ENCODE measurements at regions of chr12 and their contacts with region 1.

Region 1: DNA sequence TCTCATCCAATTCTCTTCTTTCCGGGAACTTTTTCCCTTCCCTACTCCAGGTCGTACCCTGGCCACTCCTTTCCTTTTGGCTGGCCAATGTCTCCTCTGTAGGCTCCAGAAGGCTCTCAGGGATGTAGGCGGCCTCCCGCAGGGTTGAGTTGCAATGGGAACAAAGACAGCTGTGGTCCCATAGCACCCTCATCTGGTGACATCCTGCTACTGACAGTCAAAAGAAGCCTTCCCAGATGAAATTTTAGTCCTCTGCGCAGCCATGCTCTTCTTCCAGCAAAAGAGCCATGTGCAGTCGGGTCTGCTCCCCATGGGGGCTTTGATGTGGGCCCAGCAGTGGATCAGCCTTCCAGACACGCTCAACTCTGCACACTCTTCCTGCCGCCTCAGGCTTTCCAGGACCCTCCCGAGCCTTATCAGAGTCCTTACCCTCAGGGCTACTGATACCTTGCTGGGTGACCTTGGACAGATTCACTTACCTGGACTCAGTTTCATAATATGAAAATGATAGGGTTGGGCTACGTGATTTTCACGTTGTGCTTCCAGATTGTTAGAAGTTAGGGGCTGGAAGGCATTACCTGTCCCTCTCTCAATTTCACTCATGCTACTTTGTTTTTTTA is 5.5 kb upstream of the CELA1 start:
- DNase-seq: peak in 7 of 9 experiments; percentile 9 to 72 (median 43)
- ATAC-seq: peak; percentile 77
- H3K4me3 ChIP-seq: no peak overlapping the region
- H3K4me3 Mint-ChIP-seq: no peak overlapping the region
- H3K27ac ChIP-seq: no peak overlapping the region
- H3K27ac Mint-ChIP-seq: no peak overlapping the region
- H3K4me1 ChIP-seq: no peaks in the 10 kb centered on the region
- H3K4me1 Mint-ChIP-seq: peaks cover 2% of the 10 kb centered on the region
- H3K27me3 ChIP-seq: no peaks in the 10 kb centered on the region
- H3K27me3 Mint-ChIP-seq: no peaks in the 10 kb centered on the region
- CTCF ChIP-seq: peak; percentile 73

Region 2: DNA sequence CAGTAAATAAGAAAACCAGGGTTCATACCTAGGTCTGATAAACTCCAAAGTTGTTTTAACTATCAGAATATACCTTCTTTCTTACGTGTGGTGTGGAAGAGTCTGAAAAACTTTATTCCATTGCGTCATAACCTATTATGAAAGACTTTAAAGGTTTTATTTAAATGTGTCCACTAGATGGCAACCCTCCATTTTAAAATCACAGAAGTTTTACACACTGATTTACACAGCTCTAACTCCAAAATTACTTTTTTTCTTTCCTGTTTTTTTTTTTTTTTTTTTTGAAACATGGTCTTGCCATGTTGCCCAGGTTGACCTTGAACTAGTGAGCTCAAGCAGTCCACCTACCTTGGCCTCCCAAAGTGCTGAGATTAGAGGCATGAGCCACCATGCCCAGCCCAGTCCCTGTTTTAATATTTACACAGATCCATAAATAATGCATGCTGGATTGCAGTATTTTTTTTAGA is 526.6 kb before region 1 on chr12:
- CTCF ChIA-PET with region 1: interaction called, 4 read pairs
- POLR2A ChIA-PET with region 1: no interaction called
- intact Hi-C with region 1: loop called (anchors 1 to 5 kb)
- DNase-seq: peak in 2 of 9 experiments; percentile 67 to 81
- ATAC-seq: peak; percentile 92
- H3K4me3 ChIP-seq: no peak overlapping the region
- H3K4me3 Mint-ChIP-seq: no peak overlapping the region
- H3K27ac ChIP-seq: peak overlapping the region; percentile 6 to 26
- H3K27ac Mint-ChIP-seq: peak overlapping the region; percentile 87
- H3K4me1 ChIP-seq: no peaks in the 10 kb centered on the region
- H3K4me1 Mint-ChIP-seq: peaks cover 7% of the 10 kb centered on the region
- H3K27me3 ChIP-seq: no peaks in the 10 kb centered on the region
- H3K27me3 Mint-ChIP-seq: no peaks in the 10 kb centered on the region
- CTCF ChIP-seq: peak; percentile 67

Region 3: GRCh38 chr12:51377099-51377984 is 25.3 kb after region 1 on chr12:
- CTCF ChIA-PET with region 1: no interaction called
- POLR2A ChIA-PET with region 1: no interaction called
- intact Hi-C with region 1: no loop called
- DNase-seq: no peak
- ATAC-seq: no peak
- H3K4me3 ChIP-seq: no peak overlapping the region
- H3K4me3 Mint-ChIP-seq: no peak overlapping the region
- H3K27ac ChIP-seq: no peak overlapping the region
- H3K27ac Mint-ChIP-seq: no peak overlapping the region
- H3K4me1 ChIP-seq: peaks cover 12% of the 10 kb centered on the region
- H3K4me1 Mint-ChIP-seq: peaks cover 24% of the 10 kb centered on the region
- H3K27me3 ChIP-seq: no peaks in the 10 kb centered on the region
- H3K27me3 Mint-ChIP-seq: no peaks in the 10 kb centered on the region
- CTCF ChIP-seq: no peak